ENCODE measurements at regions of chr5 and their contacts with region 1.

Region 1: DNA sequence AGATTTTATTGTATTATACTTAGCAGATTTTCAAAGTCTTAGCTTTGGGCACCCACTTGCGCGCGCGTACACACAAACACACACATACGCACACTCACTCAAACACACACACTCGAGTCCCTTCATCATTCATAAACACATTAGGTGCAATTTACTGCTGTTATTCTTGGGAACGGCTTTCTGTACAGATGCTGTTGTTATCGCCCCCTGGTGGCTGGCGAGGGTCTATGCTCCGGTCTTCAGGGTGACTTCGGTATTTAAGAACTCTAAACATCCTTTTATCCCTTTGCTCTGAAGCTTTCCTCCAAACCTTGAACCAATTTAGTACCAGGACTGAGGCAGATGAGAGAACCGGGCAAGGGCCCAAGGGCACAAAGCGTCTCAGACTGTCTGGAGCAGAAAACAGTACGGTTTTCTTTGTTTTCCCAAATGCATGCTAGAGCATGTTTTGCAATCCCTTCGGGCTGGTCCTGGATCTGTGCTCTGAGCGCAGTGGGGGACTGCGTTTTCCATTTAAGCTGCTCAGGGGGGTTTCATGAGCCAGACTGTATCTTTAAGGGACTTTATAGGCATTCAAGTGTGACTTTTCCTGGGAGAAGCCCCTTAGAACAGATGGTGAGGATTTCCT is 1.7 kb upstream of the SLIT3 start:
- DNase-seq: peak; percentile 66
- H3K4me3 ChIP-seq: no peak overlapping the region
- H3K27ac ChIP-seq: no peak overlapping the region
- H3K4me1 ChIP-seq: peaks cover 38% of the 10 kb centered on the region
- H3K27me3 ChIP-seq: no peaks in the 10 kb centered on the region
- CTCF ChIP-seq: peak; percentile 88 to 98

Region 2: DNA sequence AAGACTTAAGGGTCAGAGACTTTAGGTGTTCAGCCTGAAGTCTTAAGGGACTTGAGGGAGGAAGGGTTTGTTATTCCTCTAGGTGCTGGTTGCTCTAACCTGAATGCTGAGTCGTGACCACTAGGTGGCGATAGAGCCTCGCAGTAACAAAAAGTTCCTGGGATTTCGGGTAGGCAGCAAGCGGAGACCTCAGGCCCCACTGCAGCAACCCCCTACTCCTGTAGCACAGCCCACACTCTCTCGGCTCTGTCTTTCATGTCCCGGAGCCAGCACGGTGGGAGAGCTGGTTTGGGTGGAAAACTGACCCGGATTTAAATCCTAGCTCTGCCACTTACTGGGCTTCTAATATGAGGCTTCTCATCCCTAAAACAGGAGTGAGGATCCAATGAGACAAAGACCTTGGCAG is 623.1 kb before region 1 on chr5:
- CTCF ChIA-PET with region 1: no interaction called
- dilution Hi-C with region 1: no loop called
- in situ Hi-C with region 1: no loop called
- intact Hi-C with region 1: loop called (anchors 5 kb)
- DNase-seq: peak; percentile 52
- H3K4me3 ChIP-seq: no peak overlapping the region
- H3K27ac ChIP-seq: no peak overlapping the region
- H3K4me1 ChIP-seq: no peaks in the 10 kb centered on the region
- H3K27me3 ChIP-seq: no peaks in the 10 kb centered on the region
- CTCF ChIP-seq: peak; percentile 87 to 92

Region 3: DNA sequence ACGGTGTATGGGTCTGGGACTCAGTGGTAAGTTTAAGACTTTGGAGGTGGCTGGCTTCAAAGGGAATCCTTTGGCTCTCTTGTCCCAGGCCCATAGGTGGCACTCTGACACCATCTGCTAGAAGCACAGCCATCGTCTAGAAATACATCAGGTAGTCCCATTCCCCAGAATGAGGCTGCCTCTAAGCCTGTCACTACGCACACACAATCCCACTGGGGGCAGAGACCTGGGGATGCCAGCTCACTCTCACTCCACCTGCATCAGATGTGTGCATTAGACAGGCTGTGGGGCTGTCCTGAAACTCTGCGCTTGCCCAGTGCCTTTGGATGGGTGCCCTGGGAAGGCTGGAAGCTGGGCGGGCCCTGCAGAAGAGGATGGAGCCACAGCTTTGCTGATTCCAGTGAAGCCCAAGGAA is 595.9 kb before region 1 on chr5:
- CTCF ChIA-PET with region 1: no interaction called
- dilution Hi-C with region 1: no loop called
- in situ Hi-C with region 1: no loop called
- intact Hi-C with region 1: loop called (anchors 5 kb)
- DNase-seq: peak; percentile 23
- H3K4me3 ChIP-seq: no peak overlapping the region
- H3K27ac ChIP-seq: no peak overlapping the region
- H3K4me1 ChIP-seq: no peaks in the 10 kb centered on the region
- H3K27me3 ChIP-seq: no peaks in the 10 kb centered on the region
- CTCF ChIP-seq: peak; percentile 48 to 86

Region 4: GRCh38 chr5:168987543-168988300 is 314.9 kb before region 1 on chr5:
- CTCF ChIA-PET with region 1: no interaction called
- dilution Hi-C with region 1: no loop called
- in situ Hi-C with region 1: loop called (anchors 10 kb)
- intact Hi-C with region 1: loop called (anchors 1 kb)
- DNase-seq: peak; percentile 55
- H3K4me3 ChIP-seq: no peak overlapping the region
- H3K27ac ChIP-seq: no peak overlapping the region
- H3K4me1 ChIP-seq: peaks cover 14% of the 10 kb centered on the region
- H3K27me3 ChIP-seq: no peaks in the 10 kb centered on the region
- CTCF ChIP-seq: peak; percentile 86 to 88

Region 5: GRCh38 chr5:169161022-169161680 is 141.5 kb before region 1 on chr5:
- CTCF ChIA-PET with region 1: interaction called, 4 read pairs
- dilution Hi-C with region 1: no loop called
- in situ Hi-C with region 1: no loop called
- intact Hi-C with region 1: loop called (anchors 2 kb)
- DNase-seq: peak; percentile 79
- H3K4me3 ChIP-seq: no peak overlapping the region
- H3K27ac ChIP-seq: peak overlapping the region; percentile 86
- H3K4me1 ChIP-seq: peaks cover 67% of the 10 kb centered on the region
- H3K27me3 ChIP-seq: no peaks in the 10 kb centered on the region
- CTCF ChIP-seq: no peak

Region 6: GRCh38 chr5:169268019-169268418 is 34.6 kb before region 1 on chr5:
- CTCF ChIA-PET with region 1: no interaction called
- dilution Hi-C with region 1: no loop called
- in situ Hi-C with region 1: no loop called
- intact Hi-C with region 1: loop called (anchors 1 kb)
- DNase-seq: peak; percentile 55
- H3K4me3 ChIP-seq: no peak overlapping the region
- H3K27ac ChIP-seq: no peak overlapping the region
- H3K4me1 ChIP-seq: peaks cover 12% of the 10 kb centered on the region
- H3K27me3 ChIP-seq: no peaks in the 10 kb centered on the region
- CTCF ChIP-seq: no peak

Region 7: GRCh38 chr5:169350759-169351240 is 48.2 kb after region 1 on chr5:
- CTCF ChIA-PET with region 1: no interaction called
- dilution Hi-C with region 1: no loop called
- in situ Hi-C with region 1: no loop called
- intact Hi-C with region 1: loop called (anchors 2 kb)
- DNase-seq: peak; percentile 99
- H3K4me3 ChIP-seq: no peak overlapping the region
- H3K27ac ChIP-seq: peak overlapping the region; percentile 82
- H3K4me1 ChIP-seq: peaks cover 54% of the 10 kb centered on the region
- H3K27me3 ChIP-seq: no peaks in the 10 kb centered on the region
- CTCF ChIP-seq: peak in 1 of 2 donors; percentile 10